HEK293 (cell line): ENCODE measurements at regions of chr12 and their contacts with region 1.

Region 1: DNA sequence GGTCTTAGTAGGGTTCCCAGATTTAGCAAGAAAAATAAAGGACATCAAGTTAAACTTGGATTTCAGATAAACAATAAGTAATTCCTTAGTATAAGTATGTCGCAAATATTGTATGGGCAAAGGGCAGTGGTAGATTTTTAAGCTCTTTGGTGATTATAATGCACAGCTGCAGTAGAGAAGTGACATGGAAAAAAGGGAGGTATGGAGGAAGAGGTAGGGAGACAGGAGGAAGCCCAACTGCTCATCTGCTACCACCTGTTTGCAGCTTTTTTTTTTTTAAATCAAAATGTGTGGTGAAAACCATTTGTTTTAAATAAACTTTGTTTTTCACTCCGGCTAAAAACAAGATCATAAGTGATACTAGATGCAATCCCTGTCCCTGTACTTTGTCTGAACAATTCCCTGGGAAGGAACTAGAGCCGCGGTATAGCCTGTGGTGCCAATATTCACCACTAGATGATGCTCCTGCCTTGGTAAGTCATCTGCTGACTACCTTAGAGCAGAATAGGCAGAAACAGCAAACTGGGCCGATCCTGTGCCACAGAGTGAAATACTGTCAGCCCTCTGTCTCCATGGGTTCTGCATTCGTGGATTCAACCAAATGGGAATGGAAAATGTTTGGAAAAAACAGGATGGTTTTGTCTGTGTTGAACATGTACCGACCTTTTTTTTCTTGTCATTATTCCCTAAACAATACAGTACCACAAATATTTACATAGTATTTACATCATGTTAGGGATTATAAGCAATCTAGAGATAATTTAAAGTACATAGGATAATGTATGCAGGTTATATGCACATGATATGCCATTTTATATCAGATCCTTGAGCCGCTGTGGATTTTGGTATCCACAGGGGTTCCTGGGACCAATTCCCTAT is 62.4 kb upstream of the PLBD1 start:
- H3K4me3 ChIP-seq: no peak overlapping the region
- H3K27ac ChIP-seq: no peak overlapping the region
- H3K4me1 ChIP-seq: no peaks in the 10 kb centered on the region
- CTCF ChIP-seq: peak; percentile 85

Region 2: DNA sequence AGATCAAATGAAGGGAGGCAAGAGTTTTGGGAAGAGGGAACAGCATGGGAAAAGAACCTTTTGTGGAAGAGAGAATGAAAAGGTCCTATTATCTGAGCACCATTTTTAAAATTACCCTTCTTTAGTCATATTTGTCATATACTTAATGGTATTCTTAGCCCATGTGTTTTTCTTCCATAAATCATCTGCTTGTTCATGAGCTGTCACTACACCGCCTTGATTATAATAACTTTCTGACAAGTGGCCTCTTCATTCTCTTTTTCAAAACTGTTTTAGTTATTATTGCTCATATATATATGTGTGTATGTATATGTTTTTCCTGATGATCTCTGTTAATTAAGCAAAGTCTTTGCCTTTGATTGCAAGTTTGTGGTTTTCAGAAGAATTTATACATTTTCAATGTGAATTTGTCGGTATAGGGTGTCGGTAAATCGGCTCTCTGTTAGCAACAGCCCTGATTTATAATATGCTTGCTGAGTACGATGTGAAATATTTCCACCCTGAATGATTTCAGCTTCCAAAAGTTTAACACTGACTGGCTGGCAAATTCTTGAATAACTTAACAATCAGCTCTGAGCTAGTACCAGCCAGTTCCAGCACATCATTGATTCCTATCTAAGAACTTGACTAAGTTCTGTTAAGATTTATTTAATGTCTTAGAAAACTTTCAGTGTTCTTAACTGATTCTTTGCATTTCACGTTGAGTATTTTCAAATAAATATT is 17.1 kb after region 1 on chr12:
- CTCF ChIA-PET with region 1: no interaction called
- POLR2A ChIA-PET with region 1: no interaction called
- H3K4me3 ChIP-seq: no peak overlapping the region
- H3K27ac ChIP-seq: no peak overlapping the region
- H3K4me1 ChIP-seq: no peaks in the 10 kb centered on the region
- CTCF ChIP-seq: no peak

Region 3: DNA sequence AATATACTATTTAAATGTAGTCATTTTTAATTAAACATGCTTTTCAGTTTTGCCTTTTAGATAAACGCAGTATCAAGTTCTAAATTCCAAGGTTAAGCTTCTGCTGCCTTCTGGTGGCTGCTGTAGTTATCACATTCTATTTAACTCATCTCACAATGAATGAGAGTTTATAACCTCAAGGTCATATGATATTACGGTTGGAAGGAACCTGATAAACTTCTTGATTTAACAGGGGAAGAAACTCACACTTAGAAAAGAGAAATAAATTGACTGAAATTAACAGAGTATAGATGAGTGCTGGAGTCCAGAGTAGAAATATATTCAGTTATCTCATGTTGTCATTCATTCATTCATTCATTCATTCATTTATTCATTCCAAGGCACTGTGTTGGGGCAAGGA is 34.4 kb after region 1 on chr12:
- CTCF ChIA-PET with region 1: interaction called, 10 read pairs
- POLR2A ChIA-PET with region 1: no interaction called
- H3K4me3 ChIP-seq: no peak overlapping the region
- H3K27ac ChIP-seq: no peak overlapping the region
- H3K4me1 ChIP-seq: no peaks in the 10 kb centered on the region
- CTCF ChIP-seq: no peak

Region 4: DNA sequence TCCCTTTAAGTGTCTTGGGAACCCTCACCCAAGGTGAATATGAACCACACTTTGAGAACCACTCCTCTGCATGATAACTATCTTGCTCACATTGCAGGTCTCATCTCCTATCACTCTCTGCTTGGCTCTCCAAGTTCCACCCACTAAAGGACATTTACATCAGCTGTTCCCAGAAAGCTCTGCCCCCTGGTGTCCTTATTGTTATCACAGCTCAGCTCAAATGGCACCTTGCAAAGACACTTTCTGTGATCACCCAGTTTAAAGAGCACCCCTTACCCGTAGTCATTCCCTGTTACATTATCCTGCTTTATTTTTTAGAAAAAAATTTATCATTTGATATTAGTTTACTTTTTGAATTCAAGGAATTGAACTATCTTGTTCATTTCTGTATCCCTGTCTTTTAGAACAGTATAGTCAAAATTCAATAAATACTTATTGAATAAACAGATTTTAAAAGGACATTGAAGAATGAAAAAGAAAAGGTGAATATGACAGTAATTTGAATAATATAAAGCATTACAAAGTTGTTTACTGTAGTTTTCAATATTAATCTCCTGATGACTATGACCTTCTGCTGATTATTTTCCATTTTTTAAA is 86.9 kb after region 1 on chr12:
- CTCF ChIA-PET with region 1: interaction called, 12 read pairs
- POLR2A ChIA-PET with region 1: no interaction called
- H3K4me3 ChIP-seq: no peak overlapping the region
- H3K27ac ChIP-seq: no peak overlapping the region
- H3K4me1 ChIP-seq: no peaks in the 10 kb centered on the region
- CTCF ChIP-seq: no peak